GM12878 (cell line): ENCODE measurements at regions of chr14 and their contacts with region 1.

Region 1: GRCh38 chr14:105490572-105491366 is at the start of gene TEDC1:
- DNase-seq: peak; percentile 100
- ATAC-seq: peak; percentile 82
- H3K4me3 ChIP-seq: peak within 1 kb of the TSS; percentile 84
- H3K27ac ChIP-seq: peak within 1 kb of the TSS; percentile 67
- H3K4me1 ChIP-seq: peaks cover 25% of the 10 kb centered on the region
- H3K27me3 ChIP-seq: no peaks in the 10 kb centered on the region
- CTCF ChIP-seq: peak; percentile 69 to 93 (median 78); a peak in 5 of 6 replicates
- EP300 ChIP-seq: no peak
- POLR2A ChIP-seq: peak; percentile 82
- RAD21 ChIP-seq: peak; percentile 60
- polyA plus RNA-seq, gene TEDC1: 0.19 to 1.6 TPM

Region 2: GRCh38 chr14:105300792-105301533 is 189.8 kb before region 1 on chr14 and contains the start of gene BRF1:
- CTCF ChIA-PET with region 1: no interaction called
- POLR2A ChIA-PET with region 1: no interaction called
- RAD21 ChIA-PET with region 1: interaction called, 5 read pairs
- SMC1A ChIA-PET with region 1: no interaction called
- in situ Hi-C with region 1: no loop called
- intact Hi-C with region 1: loop called (anchors 1 kb)
- DNase-seq: peak; percentile 78
- ATAC-seq: peak; percentile 92
- H3K4me3 ChIP-seq: peak within 1 kb of the TSS; percentile 88
- H3K27ac ChIP-seq: peak within 1 kb of the TSS; percentile 82
- H3K4me1 ChIP-seq: peaks cover 3% of the 10 kb centered on the region
- H3K27me3 ChIP-seq: no peaks in the 10 kb centered on the region
- CTCF ChIP-seq: no peak
- EP300 ChIP-seq: no peak; a peak in 1 of 4 replicates
- POLR2A ChIP-seq: peak; percentile 90
- RAD21 ChIP-seq: no peak
- polyA plus RNA-seq, gene BRF1: 0.21 to 0.58 TPM

Region 3: GRCh38 chr14:105369653-105370040 is 121.1 kb before region 1 on chr14:
- CTCF ChIA-PET with region 1: interaction called, 67 read pairs
- POLR2A ChIA-PET with region 1: interaction called, 4 read pairs
- RAD21 ChIA-PET with region 1: interaction called, 29 read pairs
- SMC1A ChIA-PET with region 1: interaction called, 20 read pairs
- in situ Hi-C with region 1: loop called (anchors 5 kb)
- intact Hi-C with region 1: loop called (anchors 1 kb)
- DNase-seq: no peak
- ATAC-seq: no peak
- H3K4me3 ChIP-seq: no peak overlapping the region
- H3K27ac ChIP-seq: no peak overlapping the region
- H3K4me1 ChIP-seq: no peaks in the 10 kb centered on the region
- H3K27me3 ChIP-seq: no peaks in the 10 kb centered on the region
- CTCF ChIP-seq: no peak
- EP300 ChIP-seq: no peak
- POLR2A ChIP-seq: no peak
- RAD21 ChIP-seq: no peak

Region 4: DNA sequence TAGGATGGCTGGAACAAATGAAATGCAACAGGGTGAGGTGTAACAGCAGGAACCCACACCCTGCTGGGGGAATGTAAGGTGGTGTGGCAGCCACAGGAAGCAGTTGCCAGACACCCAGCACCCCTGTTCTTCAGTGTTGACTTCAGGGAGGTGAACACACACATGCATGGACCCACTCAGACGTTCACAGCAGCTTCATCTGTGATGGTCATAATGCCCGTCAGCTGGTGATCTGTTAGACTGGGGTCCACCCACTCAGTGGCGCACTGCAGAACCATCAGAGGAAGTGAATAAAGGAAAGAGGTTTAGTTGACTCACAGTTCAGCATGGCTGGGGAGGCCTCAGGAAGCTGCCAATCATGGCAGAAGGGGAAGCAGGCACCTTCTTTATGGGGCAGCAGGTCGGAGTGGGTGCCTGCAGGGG is 115.1 kb before region 1 on chr14:
- CTCF ChIA-PET with region 1: interaction called, 67 read pairs
- POLR2A ChIA-PET with region 1: no interaction called
- RAD21 ChIA-PET with region 1: interaction called, 29 read pairs
- SMC1A ChIA-PET with region 1: interaction called, 20 read pairs
- in situ Hi-C with region 1: loop called (anchors 5 kb)
- intact Hi-C with region 1: loop called (anchors 1 kb)
- DNase-seq: no peak
- ATAC-seq: peak; percentile 50
- H3K4me3 ChIP-seq: no peak overlapping the region
- H3K27ac ChIP-seq: no peak overlapping the region
- H3K4me1 ChIP-seq: no peaks in the 10 kb centered on the region; the same call in none of the 2 replicates
- H3K27me3 ChIP-seq: no peaks in the 10 kb centered on the region
- CTCF ChIP-seq: no peak
- EP300 ChIP-seq: no peak
- POLR2A ChIP-seq: no peak
- RAD21 ChIP-seq: no peak

Region 5: DNA sequence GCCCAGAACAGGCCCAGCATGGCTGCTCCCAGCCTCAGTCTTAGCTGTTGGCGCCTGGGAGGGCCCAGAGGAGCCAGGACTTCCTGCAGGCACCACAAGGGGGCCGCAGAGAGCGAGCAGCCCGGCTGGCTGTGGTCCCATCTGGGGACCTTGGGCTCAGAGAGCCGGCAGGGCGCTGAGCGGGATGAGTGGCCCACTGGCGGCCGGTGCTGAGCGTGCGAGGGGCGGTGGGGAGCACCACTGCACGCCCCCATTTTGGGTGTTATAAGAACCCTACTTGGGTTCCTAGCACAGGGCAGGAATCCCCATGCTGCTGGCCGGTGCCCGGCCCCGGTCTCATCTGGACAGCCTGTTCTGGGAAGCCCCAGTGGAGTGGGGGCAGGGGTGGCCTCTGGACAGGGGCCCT is 42.1 kb before region 1 on chr14:
- CTCF ChIA-PET with region 1: interaction called, 3 read pairs
- POLR2A ChIA-PET with region 1: no interaction called
- RAD21 ChIA-PET with region 1: interaction called, 4 read pairs
- SMC1A ChIA-PET with region 1: no interaction called
- in situ Hi-C with region 1: no loop called
- intact Hi-C with region 1: loop called (anchors 1 kb)
- DNase-seq: no peak
- ATAC-seq: peak; percentile 98
- H3K4me3 ChIP-seq: no peak overlapping the region
- H3K27ac ChIP-seq: no peak overlapping the region
- H3K4me1 ChIP-seq: no peaks in the 10 kb centered on the region
- H3K27me3 ChIP-seq: no peaks in the 10 kb centered on the region
- CTCF ChIP-seq: peak; percentile 56 to 80 (median 62)
- EP300 ChIP-seq: no peak
- POLR2A ChIP-seq: no peak
- RAD21 ChIP-seq: peak; percentile 49

Region 6: GRCh38 chr14:105464479-105464878 is 26.3 kb before region 1 on chr14:
- CTCF ChIA-PET with region 1: no interaction called
- POLR2A ChIA-PET with region 1: no interaction called
- RAD21 ChIA-PET with region 1: no interaction called
- SMC1A ChIA-PET with region 1: no interaction called
- in situ Hi-C with region 1: no loop called
- intact Hi-C with region 1: no loop called
- DNase-seq: no peak
- ATAC-seq: no peak
- H3K4me3 ChIP-seq: no peak overlapping the region
- H3K27ac ChIP-seq: no peak overlapping the region
- H3K4me1 ChIP-seq: no peaks in the 10 kb centered on the region
- H3K27me3 ChIP-seq: no peaks in the 10 kb centered on the region
- CTCF ChIP-seq: no peak
- EP300 ChIP-seq: no peak
- POLR2A ChIP-seq: no peak
- RAD21 ChIP-seq: no peak

Region 7: GRCh38 chr14:105527661-105528581 is 37.2 kb after region 1 on chr14:
- CTCF ChIA-PET with region 1: interaction called, 6 read pairs
- POLR2A ChIA-PET with region 1: no interaction called
- RAD21 ChIA-PET with region 1: interaction called, 10 read pairs
- SMC1A ChIA-PET with region 1: interaction called, 3 read pairs
- in situ Hi-C with region 1: no loop called
- intact Hi-C with region 1: loop called (anchors 5 kb)
- DNase-seq: no peak
- ATAC-seq: peak; percentile 84
- H3K4me3 ChIP-seq: peak overlapping the region; percentile 65
- H3K27ac ChIP-seq: no peak overlapping the region
- H3K4me1 ChIP-seq: peaks cover 4% of the 10 kb centered on the region
- H3K27me3 ChIP-seq: peaks cover 5 to 7% of the 10 kb centered on the region in 2 experiments; a peak in 3 of 4 replicates
- CTCF ChIP-seq: peak; percentile 70 to 92 (median 87)
- EP300 ChIP-seq: no peak
- POLR2A ChIP-seq: no peak
- RAD21 ChIP-seq: peak; percentile 69

Region 8: DNA sequence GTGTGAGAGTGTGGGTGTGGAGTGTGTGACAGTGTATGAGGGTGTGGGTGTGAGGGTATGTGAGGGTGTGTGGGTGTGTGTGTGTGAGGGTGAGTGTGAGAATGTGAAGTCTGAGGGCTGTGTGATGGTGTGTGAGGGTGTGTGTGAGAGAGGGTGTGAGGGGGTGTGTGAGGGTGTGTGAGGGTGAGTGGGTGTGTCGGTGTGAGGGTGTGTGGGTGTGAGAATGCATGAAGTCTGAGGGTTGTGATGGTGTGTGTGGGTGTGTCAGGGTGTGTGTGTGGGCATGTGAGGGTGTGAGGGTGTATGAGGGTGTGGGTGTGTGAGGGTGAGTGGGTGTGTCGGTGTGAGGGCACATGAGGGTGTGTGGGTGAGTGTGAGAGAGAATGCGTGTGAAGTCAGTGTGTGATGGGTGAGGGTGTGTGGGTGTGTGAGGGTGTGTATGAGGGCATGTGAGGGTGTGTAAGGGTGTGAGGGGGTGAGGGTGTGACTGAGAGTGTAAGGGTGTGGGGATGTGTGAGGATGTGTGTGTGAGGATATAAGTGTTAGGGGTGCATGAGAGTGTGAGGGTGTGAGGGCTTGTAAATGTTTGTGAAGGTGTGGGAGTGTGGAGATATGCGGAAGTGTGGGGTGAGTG is 72.1 kb after region 1 on chr14:
- CTCF ChIA-PET with region 1: no interaction called
- POLR2A ChIA-PET with region 1: no interaction called
- RAD21 ChIA-PET with region 1: no interaction called
- SMC1A ChIA-PET with region 1: no interaction called
- in situ Hi-C with region 1: no loop called
- intact Hi-C with region 1: no loop called
- DNase-seq: no peak
- ATAC-seq: no peak
- H3K4me3 ChIP-seq: no peak overlapping the region
- H3K27ac ChIP-seq: peak overlapping the region; percentile 73
- H3K4me1 ChIP-seq: peaks cover 46% of the 10 kb centered on the region
- H3K27me3 ChIP-seq: no peaks in the 10 kb centered on the region
- CTCF ChIP-seq: no peak
- EP300 ChIP-seq: no peak
- POLR2A ChIP-seq: no peak
- RAD21 ChIP-seq: no peak